ENCODE measurements at regions of chr7 and their contacts with region 1.

Region 1: DNA sequence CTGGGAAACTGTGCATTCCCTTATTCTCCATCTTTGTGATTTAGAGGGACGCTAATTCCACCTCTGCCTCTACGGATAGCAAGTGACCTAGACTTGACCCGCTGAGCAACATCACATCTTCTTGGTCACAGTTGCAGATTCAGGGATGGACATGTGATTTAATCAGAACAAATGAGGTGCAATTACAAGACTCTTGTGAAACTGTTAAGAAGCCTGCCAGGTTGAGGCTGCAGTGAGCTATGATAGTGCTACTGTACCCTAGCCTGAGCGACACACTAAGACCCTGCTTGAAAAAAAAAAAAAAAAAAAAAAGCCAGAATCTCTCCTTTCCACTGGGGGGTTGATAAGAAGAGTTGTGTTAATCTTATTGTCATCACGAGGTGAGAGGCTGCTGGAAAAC is 14.4 kb downstream of the MPLKIP start:
- DNase-seq: no peak
- H3K4me3 ChIP-seq: no peak overlapping the region
- H3K27ac ChIP-seq: no peak overlapping the region
- H3K4me1 ChIP-seq: peaks cover 31% of the 10 kb centered on the region
- H3K27me3 ChIP-seq: no peaks in the 10 kb centered on the region
- CTCF ChIP-seq: no peak

Region 2: DNA sequence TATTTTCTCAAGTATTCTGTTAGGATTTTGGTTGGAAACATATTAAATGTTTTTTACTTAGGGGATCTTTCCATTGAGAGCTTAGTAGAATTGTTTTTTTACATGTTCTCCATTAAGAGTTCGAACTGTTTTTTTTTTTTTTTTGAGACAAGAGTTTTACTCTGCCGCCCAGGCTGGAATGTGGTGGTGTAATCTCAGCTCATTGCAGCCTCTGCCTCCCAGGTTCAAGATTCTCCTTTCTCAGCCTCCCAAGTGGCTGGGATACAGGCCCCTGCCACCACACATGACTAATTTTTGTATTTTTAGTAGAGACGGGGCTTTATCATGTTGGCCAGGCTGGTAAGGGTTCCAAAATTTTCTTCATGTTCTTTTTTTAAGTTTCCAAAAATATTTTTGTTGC is 18.8 kb before region 1 on chr7:
- CTCF ChIA-PET with region 1: no interaction called
- POLR2A ChIA-PET with region 1: interaction called, 14 read pairs
- intact Hi-C with region 1: no loop called
- DNase-seq: no peak
- H3K4me3 ChIP-seq: no peak overlapping the region
- H3K27ac ChIP-seq: no peak overlapping the region
- H3K4me1 ChIP-seq: no peaks in the 10 kb centered on the region
- H3K27me3 ChIP-seq: no peaks in the 10 kb centered on the region
- CTCF ChIP-seq: no peak